Activated CD4-positive, alpha-beta T cell treated with anti-CD3 and anti-CD28 coated beads, Interleukin-2, amount 10 ng/mL, durations not matched to agents 24 days and 14 days (primary cell): ENCODE measurements at regions of chr2 and their contacts with region 1.

Region 1: GRCh38 chr2:74391580-74392448 is 11.7 kb upstream of the DCTN1 start:
- DNase-seq: peak; percentile 98
- H3K4me3 Mint-ChIP-seq: peak overlapping the region; percentile 93
- H3K27ac Mint-ChIP-seq: peak overlapping the region; percentile 98
- H3K4me1 Mint-ChIP-seq: peaks cover 8% of the 10 kb centered on the region
- H3K27me3 Mint-ChIP-seq: peaks cover 10% of the 10 kb centered on the region

Region 2: DNA sequence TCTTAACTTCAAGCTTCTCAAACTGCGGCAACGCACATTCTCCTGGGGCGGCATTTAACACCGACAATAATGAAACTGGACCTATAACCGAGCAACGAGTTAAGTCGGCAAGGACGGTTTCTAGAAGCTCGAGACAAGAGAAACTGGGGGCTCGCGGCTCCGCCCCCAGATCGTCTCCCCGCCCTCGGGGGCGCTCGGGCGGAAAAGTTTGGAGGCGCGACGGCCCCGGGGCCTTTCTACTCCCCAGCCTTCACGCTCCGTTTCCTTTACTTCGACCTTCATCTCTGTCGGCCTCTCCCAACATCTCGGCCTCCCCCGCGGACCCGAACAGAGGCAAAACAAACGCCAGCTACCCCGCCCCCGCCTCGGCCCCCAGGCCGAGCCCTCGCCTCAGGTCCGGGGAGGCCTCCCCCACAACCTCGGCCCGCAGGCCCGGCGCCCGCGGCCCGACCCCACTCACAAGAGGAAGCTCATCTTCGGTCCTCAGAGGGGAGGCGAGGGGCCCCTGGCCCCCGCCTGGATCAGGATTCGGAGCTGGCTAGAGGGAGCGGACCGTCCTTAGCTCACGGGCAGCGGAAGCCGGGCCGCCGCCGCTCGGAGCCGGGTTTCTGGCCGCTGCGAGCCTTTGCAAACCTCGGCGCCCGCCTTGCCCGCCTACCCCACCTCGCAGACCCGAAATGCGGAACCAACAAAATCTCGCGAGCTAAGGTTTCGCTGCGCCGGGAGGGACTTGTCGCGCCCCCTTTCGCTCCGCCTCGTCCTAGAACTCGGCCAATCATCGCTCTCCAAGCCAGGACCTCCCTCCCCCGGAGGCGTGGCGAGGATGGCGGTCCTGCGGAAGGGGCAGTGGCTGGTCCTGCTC is 213.4 kb before region 1 on chr2 and contains the start of gene MOB1A:
- intact Hi-C with region 1: loop called (anchors 5 kb)
- DNase-seq: peak; percentile 100
- H3K4me3 Mint-ChIP-seq: peak within 1 kb of the TSS; percentile 84
- H3K27ac Mint-ChIP-seq: peak within 1 kb of the TSS; percentile 90
- H3K4me1 Mint-ChIP-seq: peaks cover 43% of the 10 kb centered on the region
- H3K27me3 Mint-ChIP-seq: no peaks in the 10 kb centered on the region
- total RNA-seq, gene MOB1A: 203 and 204 TPM in 2 replicates

Region 3: GRCh38 chr2:74250189-74250631 is 141.6 kb before region 1 on chr2:
- intact Hi-C with region 1: loop called (anchors 1 kb)
- DNase-seq: peak; percentile 85
- H3K4me3 Mint-ChIP-seq: no peak overlapping the region
- H3K27ac Mint-ChIP-seq: no peak overlapping the region
- H3K4me1 Mint-ChIP-seq: peaks cover 5% of the 10 kb centered on the region
- H3K27me3 Mint-ChIP-seq: no peaks in the 10 kb centered on the region

Region 4: DNA sequence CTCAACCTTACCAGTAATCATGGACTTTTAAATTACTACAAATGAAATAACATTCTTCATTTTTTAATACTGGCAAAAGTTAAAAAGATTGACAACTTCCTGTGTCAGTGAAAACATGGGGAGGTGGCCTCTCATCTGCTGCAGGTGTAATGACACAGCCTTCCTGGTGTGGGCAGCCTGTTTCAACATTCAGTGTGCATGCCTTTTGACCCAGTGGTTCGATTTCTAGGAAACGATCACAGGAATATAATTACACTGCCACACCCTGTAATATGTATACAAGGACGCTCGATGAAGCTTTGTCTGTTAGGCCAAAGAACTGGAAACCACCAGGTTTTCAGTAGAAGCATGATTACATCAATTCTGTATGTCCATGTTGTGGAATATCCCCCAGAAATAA is 124.7 kb before region 1 on chr2:
- intact Hi-C with region 1: loop called (anchors 5 kb)
- DNase-seq: peak; percentile 89
- H3K4me3 Mint-ChIP-seq: peak overlapping the region; percentile 51
- H3K27ac Mint-ChIP-seq: peak overlapping the region; percentile 49
- H3K4me1 Mint-ChIP-seq: peaks cover 18% of the 10 kb centered on the region
- H3K27me3 Mint-ChIP-seq: no peaks in the 10 kb centered on the region

Region 5: GRCh38 chr2:74334931-74335333 is 56.9 kb before region 1 on chr2:
- intact Hi-C with region 1: loop called (anchors 5 kb)
- DNase-seq: peak; percentile 93
- H3K4me3 Mint-ChIP-seq: no peak overlapping the region
- H3K27ac Mint-ChIP-seq: no peak overlapping the region
- H3K4me1 Mint-ChIP-seq: no peaks in the 10 kb centered on the region
- H3K27me3 Mint-ChIP-seq: no peaks in the 10 kb centered on the region

Region 6: DNA sequence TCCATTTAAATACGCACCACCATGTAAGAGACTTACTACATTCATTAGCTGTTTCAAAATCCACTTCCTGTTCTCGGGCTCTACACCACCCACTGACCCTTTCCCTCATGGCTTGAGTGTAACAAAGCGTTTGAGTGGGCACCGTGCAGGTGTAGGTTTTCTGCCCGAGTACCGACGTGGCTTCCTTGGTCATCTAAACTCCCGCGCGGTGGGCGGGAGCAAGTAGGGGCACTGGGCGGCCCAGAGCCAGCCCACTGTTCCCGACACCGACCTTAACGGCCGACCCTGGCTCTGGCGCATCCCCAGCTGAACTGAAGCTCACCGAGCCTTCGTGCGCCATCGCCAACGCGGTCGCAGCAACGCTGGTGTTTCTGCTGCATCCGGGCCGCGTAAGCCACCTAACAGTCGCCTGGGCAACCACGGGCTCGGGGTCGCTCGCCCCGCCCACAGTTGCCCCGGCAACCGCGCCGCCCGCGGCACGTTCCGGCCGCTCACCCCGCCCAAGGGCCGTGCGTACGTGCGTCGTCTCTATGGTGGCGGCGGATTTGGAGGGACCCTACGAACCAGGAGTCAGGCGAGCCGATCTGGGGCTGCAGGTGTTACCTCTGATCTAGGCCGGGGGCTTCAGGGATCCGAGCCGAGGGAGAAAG is 29.5 kb after region 1 on chr2 and contains the starts of genes C2orf81 and WDR54:
- intact Hi-C with region 1: loop called (anchors 1 kb)
- DNase-seq: peak; percentile 99
- H3K4me3 Mint-ChIP-seq: peak within 1 kb of the TSS; percentile 94
- H3K27ac Mint-ChIP-seq: peak within 1 kb of the TSS; percentile 96
- H3K4me1 Mint-ChIP-seq: peaks cover 20% of the 10 kb centered on the region
- H3K27me3 Mint-ChIP-seq: peaks cover 2% of the 10 kb centered on the region
- total RNA-seq, gene C2orf81: 1.7 and 2.0 TPM in 2 replicates
- total RNA-seq, gene WDR54: 72.1 and 78.2 TPM in 2 replicates